Calu3 (cell line): ENCODE measurements at regions of chr9 and their contacts with region 1.

Region 1: GRCh38 chr9:76181020-76181641 is 213.1 kb downstream of the RFK start:
- DNase-seq: peak; percentile 34
- H3K4me3 Mint-ChIP-seq: no peak overlapping the region
- H3K27ac Mint-ChIP-seq: peak overlapping the region; percentile 87
- H3K4me1 Mint-ChIP-seq: peaks cover 20% of the 10 kb centered on the region
- H3K27me3 Mint-ChIP-seq: no peaks in the 10 kb centered on the region
- CTCF ChIP-seq: no peak

Region 2: GRCh38 chr9:75880618-75881017 is 300.5 kb before region 1 on chr9:
- CTCF ChIA-PET with region 1: interaction called, 10 read pairs
- intact Hi-C with region 1: no loop called
- DNase-seq: no peak
- H3K4me3 Mint-ChIP-seq: no peak overlapping the region
- H3K27ac Mint-ChIP-seq: no peak overlapping the region
- H3K4me1 Mint-ChIP-seq: no peaks in the 10 kb centered on the region
- H3K27me3 Mint-ChIP-seq: no peaks in the 10 kb centered on the region
- CTCF ChIP-seq: no peak

Region 3: GRCh38 chr9:76393963-76394679 is 213.0 kb after region 1 on chr9 and contains the start of gene RFK:
- CTCF ChIA-PET with region 1: no interaction called
- intact Hi-C with region 1: loop called (anchors 1 kb)
- DNase-seq: peak; percentile 94
- H3K4me3 Mint-ChIP-seq: peak within 1 kb of the TSS; percentile 82
- H3K27ac Mint-ChIP-seq: peak within 1 kb of the TSS; percentile 91
- H3K4me1 Mint-ChIP-seq: no peaks in the 10 kb centered on the region
- H3K27me3 Mint-ChIP-seq: no peaks in the 10 kb centered on the region
- CTCF ChIP-seq: no peak
- total RNA-seq, gene RFK: 13.0 and 14.0 TPM in 2 replicates